Cardiac septum (tissue), 1 donor: ENCODE measurements at regions of chr12 and their contacts with region 1.

Region 1: GRCh38 chr12:6825398-6826124 is 2.6 kb upstream of the P3H3 start:
- DNase-seq: peak; percentile 93

Region 2: DNA sequence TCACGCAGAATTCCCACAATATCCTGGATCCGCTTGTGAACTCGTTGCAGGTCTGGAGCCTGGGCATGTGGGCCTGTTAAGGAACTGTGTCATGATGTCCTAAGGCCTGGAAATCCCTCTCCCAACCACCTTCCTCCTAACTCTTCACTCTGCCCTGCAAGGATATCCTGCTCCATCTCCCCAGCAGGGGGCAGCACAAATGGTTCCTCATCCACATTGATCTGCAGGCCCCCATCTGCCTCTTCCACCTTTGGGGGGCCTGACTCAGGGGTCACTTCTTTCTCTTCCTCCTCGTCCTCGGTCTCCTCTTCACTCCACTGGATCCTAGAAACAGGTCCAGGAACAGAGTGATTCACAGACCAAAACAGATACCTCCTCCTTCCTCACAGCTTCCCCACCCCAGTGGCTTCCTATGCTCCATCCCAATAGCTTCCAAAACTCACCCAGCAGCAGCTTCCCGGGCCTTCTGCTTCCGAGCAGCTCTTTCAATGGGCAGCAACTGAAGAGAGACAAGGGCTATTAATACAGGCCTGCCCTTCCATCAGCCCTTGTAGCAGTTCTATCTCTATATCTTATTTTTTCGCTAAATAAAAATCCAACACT is 262.0 kb before region 1 on chr12:
- intact Hi-C with region 1: no loop called
- DNase-seq: no peak

Region 3: GRCh38 chr12:6766651-6767349 is 58.8 kb before region 1 on chr12:
- intact Hi-C with region 1: loop called (anchors 5 kb)
- DNase-seq: peak; percentile 93